GM13977 (cell line): ENCODE measurements at regions of chr1 and their contacts with region 1.

Region 1: GRCh38 chr1:221478050-221478949 is 263.6 kb downstream of the DUSP10 start:
- DNase-seq: peak; percentile 16
- CTCF ChIP-seq: peak; percentile 89

Region 2: DNA sequence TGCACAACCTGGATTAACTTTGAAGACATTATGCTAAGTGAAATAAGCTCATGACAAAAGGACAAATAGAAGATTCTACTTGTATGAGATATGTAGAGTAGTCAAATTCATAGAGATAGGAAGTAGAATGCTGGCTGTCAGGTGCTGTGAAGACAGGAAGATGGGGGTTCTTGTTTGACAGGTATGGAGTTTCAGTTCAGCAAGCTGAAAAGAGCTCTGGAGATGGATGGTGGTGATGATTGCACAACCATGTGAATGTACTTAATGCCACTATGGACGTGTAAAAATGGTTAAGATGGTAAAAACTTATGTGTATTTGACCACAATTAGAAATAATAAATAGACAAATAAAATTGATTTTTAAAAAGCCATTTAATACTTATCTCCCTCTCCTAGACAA is 433.4 kb after region 1 on chr1:
- in situ Hi-C with region 1: no loop called
- DNase-seq: no peak
- CTCF ChIP-seq: no peak

Region 3: DNA sequence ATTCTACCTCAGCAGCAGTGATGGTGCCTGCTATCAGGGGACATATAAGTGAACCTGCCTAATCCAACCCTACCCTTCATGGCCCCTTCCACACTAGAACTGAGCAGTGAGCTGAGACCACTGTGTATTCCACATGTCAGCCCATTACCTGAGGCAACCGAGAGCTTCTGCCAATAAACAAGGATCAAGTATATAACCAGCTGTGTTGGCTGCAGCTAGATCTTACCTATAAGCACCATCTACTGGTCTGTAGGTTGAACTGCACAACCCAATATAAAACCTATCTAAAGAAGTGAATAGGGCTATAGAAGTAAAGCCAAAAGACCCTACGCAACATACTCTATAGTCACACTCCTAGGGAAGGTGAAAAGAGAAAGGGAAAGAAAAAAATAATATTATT is 692.7 kb after region 1 on chr1:
- in situ Hi-C with region 1: loop called (anchors 10 kb)
- DNase-seq: peak; percentile 40
- CTCF ChIP-seq: peak; percentile 70

Region 4: GRCh38 chr1:222455188-222455879 is 977.0 kb after region 1 on chr1:
- in situ Hi-C with region 1: loop called (anchors 10 kb)
- DNase-seq: peak; percentile 76
- CTCF ChIP-seq: peak; percentile 96